GM12878 (cell line): ENCODE measurements at regions of chr2 and their contacts with region 1.

Region 1: DNA sequence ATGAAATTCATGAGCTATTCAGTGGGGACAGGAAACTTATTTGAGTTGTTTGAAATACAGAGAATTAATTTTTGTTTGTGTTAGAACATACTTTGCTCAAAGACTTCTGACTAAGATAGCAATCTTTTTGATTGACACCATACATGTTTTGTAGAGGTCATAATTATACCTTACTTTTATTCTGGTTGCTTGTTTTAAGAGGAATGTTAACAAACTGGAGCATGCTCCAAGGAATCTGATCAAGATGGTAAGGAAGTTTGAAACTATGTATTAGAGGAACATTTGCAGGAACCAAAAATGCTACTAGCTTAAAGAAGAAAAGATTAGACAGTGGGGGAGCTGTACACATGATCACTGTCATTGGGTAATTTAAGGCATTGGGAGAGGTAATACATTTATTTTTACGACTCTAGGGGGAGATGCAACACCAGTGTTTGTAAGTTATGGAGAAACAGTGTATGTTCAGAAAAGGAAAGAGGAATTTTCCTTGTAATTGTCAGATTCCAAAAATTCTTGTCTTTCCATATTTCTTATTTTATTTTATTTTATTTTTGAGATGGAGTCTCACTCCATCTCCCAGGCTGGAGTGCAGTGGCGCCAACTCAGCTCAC is 8.0 kb downstream of the AGFG1 start:
- DNase-seq: no peak
- ATAC-seq: peak; percentile 64
- H3K4me3 ChIP-seq: peak overlapping the region; percentile 12; the same call in 1 of the 2 replicates
- H3K27ac ChIP-seq: peak overlapping the region; percentile 68
- H3K4me1 ChIP-seq: peaks cover 32% of the 10 kb centered on the region
- H3K27me3 ChIP-seq: no peaks in the 10 kb centered on the region
- CTCF ChIP-seq: peak; percentile 28 to 65 (median 56); a peak in 5 of 6 replicates
- EP300 ChIP-seq: no peak
- POLR2A ChIP-seq: no peak
- RAD21 ChIP-seq: peak; percentile 65

Region 2: GRCh38 chr2:227310751-227311100 is 169.2 kb before region 1 on chr2:
- CTCF ChIA-PET with region 1: no interaction called
- POLR2A ChIA-PET with region 1: no interaction called
- RAD21 ChIA-PET with region 1: no interaction called
- SMC1A ChIA-PET with region 1: no interaction called
- in situ Hi-C with region 1: no loop called
- intact Hi-C with region 1: no loop called
- DNase-seq: no peak
- ATAC-seq: no peak
- H3K4me3 ChIP-seq: no peak overlapping the region
- H3K27ac ChIP-seq: no peak overlapping the region
- H3K4me1 ChIP-seq: peaks cover 9% of the 10 kb centered on the region; the same call in 1 of the 2 replicates
- H3K27me3 ChIP-seq: no peaks in the 10 kb centered on the region
- CTCF ChIP-seq: no peak
- EP300 ChIP-seq: no peak
- POLR2A ChIP-seq: no peak
- RAD21 ChIP-seq: no peak

Region 3: GRCh38 chr2:227415538-227416424 is 64.2 kb before region 1 on chr2:
- CTCF ChIA-PET with region 1: interaction called, 127 read pairs
- POLR2A ChIA-PET with region 1: interaction called, 4 read pairs
- RAD21 ChIA-PET with region 1: interaction called, 14 read pairs
- SMC1A ChIA-PET with region 1: interaction called, 24 read pairs
- in situ Hi-C with region 1: no loop called
- intact Hi-C with region 1: no loop called
- DNase-seq: no peak
- ATAC-seq: peak; percentile 45
- H3K4me3 ChIP-seq: no peak overlapping the region
- H3K27ac ChIP-seq: no peak overlapping the region; the same call in 1 of the 2 replicates
- H3K4me1 ChIP-seq: peaks cover 31% of the 10 kb centered on the region
- H3K27me3 ChIP-seq: no peaks in the 10 kb centered on the region
- CTCF ChIP-seq: no peak
- EP300 ChIP-seq: no peak
- POLR2A ChIP-seq: no peak
- RAD21 ChIP-seq: no peak

Region 4: GRCh38 chr2:227503433-227504406 is 23.8 kb after region 1 on chr2:
- CTCF ChIA-PET with region 1: interaction called, 22 read pairs
- POLR2A ChIA-PET with region 1: interaction called, 5 read pairs
- RAD21 ChIA-PET with region 1: interaction called, 3 read pairs
- SMC1A ChIA-PET with region 1: interaction called, 18 read pairs
- in situ Hi-C with region 1: no loop called
- intact Hi-C with region 1: no loop called
- DNase-seq: no peak
- ATAC-seq: no peak
- H3K4me3 ChIP-seq: no peak overlapping the region
- H3K27ac ChIP-seq: no peak overlapping the region
- H3K4me1 ChIP-seq: peaks cover 10% of the 10 kb centered on the region; the same call in 1 of the 2 replicates
- H3K27me3 ChIP-seq: no peaks in the 10 kb centered on the region
- CTCF ChIP-seq: no peak
- EP300 ChIP-seq: no peak
- POLR2A ChIP-seq: no peak
- RAD21 ChIP-seq: no peak

Region 5: DNA sequence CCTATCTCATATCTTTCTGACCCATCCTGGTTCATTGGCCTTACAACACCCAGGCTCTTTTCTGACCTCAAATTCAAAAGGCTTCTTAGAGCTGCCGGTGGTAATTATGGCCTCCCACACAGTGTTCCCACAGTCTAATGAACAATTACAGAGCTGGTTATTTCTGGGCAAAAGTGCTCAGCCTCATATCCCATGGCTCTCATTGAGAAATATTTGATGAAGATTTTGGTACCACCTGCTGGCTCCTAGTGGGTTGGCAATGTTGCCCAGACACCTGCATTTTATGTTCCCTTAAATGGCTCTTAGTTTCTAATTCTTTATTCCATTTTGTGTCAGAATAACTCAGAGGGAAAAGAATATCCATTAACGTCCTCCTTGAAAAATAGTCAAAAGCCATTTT is 98.7 kb after region 1 on chr2:
- CTCF ChIA-PET with region 1: interaction called, 11 read pairs
- POLR2A ChIA-PET with region 1: interaction called, 3 read pairs
- RAD21 ChIA-PET with region 1: interaction called, 4 read pairs
- SMC1A ChIA-PET with region 1: interaction called, 6 read pairs
- in situ Hi-C with region 1: no loop called
- intact Hi-C with region 1: no loop called
- DNase-seq: no peak
- ATAC-seq: peak; percentile 50
- H3K4me3 ChIP-seq: no peak overlapping the region
- H3K27ac ChIP-seq: no peak overlapping the region
- H3K4me1 ChIP-seq: no peaks in the 10 kb centered on the region
- H3K27me3 ChIP-seq: no peaks in the 10 kb centered on the region
- CTCF ChIP-seq: peak in 2 of 3 experiments; percentile 12 to 14; a peak in 1 of 6 replicates
- EP300 ChIP-seq: no peak
- POLR2A ChIP-seq: no peak
- RAD21 ChIP-seq: peak; percentile 24

Region 6: GRCh38 chr2:227661019-227661649 is 181.2 kb after region 1 on chr2:
- CTCF ChIA-PET with region 1: interaction called, 28 read pairs
- POLR2A ChIA-PET with region 1: no interaction called
- RAD21 ChIA-PET with region 1: interaction called, 6 read pairs
- SMC1A ChIA-PET with region 1: interaction called, 11 read pairs
- in situ Hi-C with region 1: no loop called
- intact Hi-C with region 1: loop called (anchors 2 kb)
- DNase-seq: no peak
- ATAC-seq: no peak
- H3K4me3 ChIP-seq: no peak overlapping the region
- H3K27ac ChIP-seq: no peak overlapping the region
- H3K4me1 ChIP-seq: no peaks in the 10 kb centered on the region
- H3K27me3 ChIP-seq: no peaks in the 10 kb centered on the region
- CTCF ChIP-seq: no peak
- EP300 ChIP-seq: no peak
- POLR2A ChIP-seq: no peak
- RAD21 ChIP-seq: no peak